Activated CD4-positive, alpha-beta T cell treated with anti-CD3 and anti-CD28 coated beads, Interleukin-2, amount 10 ng/mL, durations not matched to agents 24 days and 14 days (primary cell): ENCODE measurements at regions of chr3 and their contacts with region 1.

Region 1: DNA sequence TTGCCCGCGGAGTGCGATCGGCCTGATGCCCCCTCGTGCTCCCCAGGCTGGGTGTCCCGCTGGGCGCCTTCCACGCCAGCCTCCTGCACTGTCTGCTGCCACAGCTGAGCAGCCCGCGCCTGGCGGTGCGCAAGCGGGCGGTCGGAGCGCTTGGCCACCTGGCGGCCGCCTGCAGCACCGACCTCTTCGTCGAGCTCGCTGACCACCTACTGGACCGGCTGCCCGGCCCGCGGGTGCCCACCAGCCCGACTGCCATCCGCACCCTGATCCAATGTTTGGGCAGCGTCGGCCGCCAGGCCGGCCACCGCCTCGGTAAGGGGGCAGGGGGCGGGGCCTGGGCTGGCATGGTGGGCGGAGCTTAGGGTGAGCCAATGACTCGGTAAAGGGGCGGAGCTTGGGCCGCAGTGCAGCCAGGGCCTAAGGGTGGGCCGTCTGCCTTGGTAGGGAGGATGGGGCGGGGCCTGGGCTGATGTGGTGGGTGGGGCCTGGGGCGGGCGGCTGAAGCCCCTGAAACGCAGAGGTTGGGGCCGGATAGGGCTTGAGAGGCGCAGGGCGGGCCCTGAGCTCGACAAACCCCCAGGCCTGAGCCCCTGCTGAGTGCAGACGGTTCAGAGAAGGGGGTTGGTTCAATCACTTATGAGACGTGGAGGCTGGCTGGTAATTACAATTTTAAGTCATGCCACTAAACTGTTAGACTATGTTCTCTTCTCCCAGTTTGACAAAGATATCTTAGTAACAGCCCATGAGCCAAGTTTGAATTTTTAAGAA is 13.7 kb downstream of the CAND2 start:
- DNase-seq: peak; percentile 97
- H3K4me3 Mint-ChIP-seq: peak overlapping the region; percentile 71
- H3K27ac Mint-ChIP-seq: no peak overlapping the region
- H3K4me1 Mint-ChIP-seq: peaks cover 7% of the 10 kb centered on the region
- H3K27me3 Mint-ChIP-seq: peaks cover 10% of the 10 kb centered on the region

Region 2: DNA sequence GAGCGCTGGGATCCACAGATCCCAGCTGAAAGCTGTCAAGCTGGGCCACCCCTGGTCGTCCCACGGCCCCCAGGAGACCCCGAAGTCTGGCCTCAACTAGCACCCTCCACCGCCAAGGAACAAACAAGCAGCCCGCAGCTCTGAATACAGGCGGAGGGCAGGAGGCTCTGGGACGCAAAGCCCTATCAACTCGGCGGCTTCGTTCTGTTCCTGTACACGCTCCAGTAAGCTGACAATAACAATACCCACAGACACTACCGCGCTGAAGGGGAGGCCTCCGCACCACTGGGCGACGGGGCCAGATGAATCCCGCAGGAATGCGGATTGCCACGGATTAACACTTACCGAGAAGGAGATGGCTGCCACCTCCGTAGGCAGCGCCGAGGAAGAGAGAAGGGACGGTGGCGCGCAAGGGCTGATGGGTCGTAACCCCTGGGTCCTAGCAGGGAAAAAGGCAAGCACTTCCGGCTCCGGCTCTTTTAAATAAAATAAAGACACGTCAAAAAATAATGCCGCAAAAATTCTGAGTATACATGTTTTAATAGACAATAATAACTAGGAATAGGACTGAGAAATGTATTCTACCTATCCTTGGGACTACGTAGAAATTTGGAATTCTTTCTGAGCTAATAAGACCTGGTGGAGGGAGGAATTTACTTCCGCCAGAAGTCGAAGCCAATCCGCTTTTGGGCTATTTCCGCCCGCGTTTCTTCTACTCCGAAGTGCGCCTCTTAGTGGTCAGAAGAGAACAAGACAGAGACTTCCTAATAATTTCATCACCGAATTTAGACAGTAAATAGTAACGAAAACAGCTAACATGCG is 31.2 kb after region 1 on chr3 and contains the start of gene RPL32:
- intact Hi-C with region 1: loop called (anchors 2 kb)
- DNase-seq: peak; percentile 95
- H3K4me3 Mint-ChIP-seq: peak within 1 kb of the TSS; percentile 97
- H3K27ac Mint-ChIP-seq: peak within 1 kb of the TSS; percentile 99
- H3K4me1 Mint-ChIP-seq: peaks cover 38% of the 10 kb centered on the region
- H3K27me3 Mint-ChIP-seq: no peaks in the 10 kb centered on the region
- total RNA-seq, gene RPL32: 2,085 and 2,113 TPM in 2 replicates

Region 3: DNA sequence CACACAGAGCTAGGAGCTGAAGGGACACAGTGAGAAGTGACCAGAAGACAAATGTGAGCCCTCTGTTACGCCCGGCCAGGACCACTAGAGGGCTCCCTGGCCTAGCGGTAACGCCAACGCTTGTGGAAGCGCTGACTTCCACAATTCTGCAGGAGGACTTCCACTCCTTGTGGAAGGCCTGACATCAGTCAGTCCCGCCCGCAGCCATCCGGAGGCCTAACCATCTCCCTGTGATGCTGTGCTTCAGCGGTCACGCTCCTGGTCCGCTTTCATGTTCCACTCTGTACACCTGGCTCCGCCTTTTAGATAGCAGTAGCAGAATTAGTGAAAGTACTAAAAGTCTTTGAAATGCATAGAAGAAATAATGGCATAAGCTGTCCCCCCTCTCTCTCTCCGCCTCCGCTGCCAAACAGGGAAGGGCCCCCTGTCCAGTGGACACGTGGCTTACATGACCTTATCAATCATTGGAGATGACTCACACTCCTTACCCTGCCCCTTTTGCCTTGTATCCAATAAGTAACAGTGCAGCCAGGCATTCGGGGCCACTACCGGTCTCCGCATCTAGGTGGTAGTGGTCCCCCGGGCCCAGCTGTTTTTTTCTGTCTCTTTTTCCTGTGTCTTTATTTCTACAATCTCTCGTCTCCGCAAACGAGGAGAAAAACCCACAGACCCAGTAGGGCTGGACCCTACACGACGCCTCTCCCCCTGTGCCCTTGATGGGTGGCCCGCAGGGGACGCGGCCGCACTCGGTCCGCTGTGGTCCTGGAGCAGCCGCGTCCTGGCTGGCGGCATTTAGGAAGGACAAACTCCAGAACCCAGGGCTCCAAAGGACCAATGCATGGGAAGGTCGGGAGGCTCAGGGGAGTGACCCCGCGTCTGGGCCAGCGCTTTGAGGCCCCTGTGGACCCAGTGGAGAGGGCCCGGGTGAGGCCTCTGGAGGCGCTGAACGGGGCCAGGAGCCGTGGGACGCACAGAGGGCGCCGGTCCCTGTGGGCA is 58.1 kb after region 1 on chr3:
- intact Hi-C with region 1: loop called (anchors 1 kb)
- DNase-seq: peak; percentile 88
- H3K4me3 Mint-ChIP-seq: peak overlapping the region; percentile 79
- H3K27ac Mint-ChIP-seq: peak overlapping the region; percentile 29
- H3K4me1 Mint-ChIP-seq: peaks cover 12% of the 10 kb centered on the region
- H3K27me3 Mint-ChIP-seq: peaks cover 31% of the 10 kb centered on the region

Region 4: GRCh38 chr3:12948891-12949711 is 138.9 kb after region 1 on chr3:
- intact Hi-C with region 1: no loop called
- DNase-seq: peak; percentile 75
- H3K4me3 Mint-ChIP-seq: peak overlapping the region; percentile 40
- H3K27ac Mint-ChIP-seq: peak overlapping the region; percentile 89
- H3K4me1 Mint-ChIP-seq: peaks cover 30% of the 10 kb centered on the region
- H3K27me3 Mint-ChIP-seq: no peaks in the 10 kb centered on the region